ENCODE measurements at regions of chr16 and their contacts with region 1.

Region 1: DNA sequence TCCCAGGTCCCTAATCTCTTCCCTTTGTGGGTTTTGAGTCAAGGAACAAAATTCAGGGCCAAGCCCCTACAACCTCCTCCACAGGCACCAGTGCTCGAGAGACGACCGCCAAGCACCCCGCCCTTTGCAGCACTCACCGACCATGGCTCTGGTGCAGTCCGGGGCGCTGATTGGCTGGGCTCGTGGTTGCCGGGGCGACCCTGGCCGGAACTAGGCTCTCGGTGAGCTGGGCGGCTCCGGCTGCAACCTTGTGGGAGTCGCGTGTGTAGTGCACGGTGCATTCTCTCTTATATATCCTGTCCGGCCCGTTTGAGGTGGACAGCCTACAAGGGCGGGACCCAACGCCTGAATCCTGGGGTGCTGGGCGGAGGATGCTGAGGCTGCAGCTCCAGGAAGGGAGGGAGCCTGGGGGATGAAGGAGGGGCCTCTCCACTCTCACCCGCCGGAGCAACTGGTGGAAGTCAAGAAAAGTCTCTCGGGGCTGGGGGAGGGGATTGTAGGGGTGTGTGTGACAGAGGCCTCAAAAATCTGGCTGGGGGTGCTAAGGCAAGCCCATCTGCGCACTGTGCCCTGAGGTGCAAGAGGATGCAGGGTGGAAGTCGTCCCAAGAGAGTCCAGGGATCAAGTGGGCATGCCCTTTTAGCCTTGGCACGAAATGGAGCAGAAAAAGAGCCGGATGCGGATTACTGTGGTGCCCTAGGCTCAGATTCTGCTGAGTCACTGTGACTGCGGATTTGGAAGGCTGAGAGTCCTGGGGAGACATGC is at the start of gene NQO1:
- DNase-seq: peak; percentile 97
- H3K4me3 ChIP-seq: peak within 1 kb of the TSS; percentile 80
- H3K27ac ChIP-seq: peak within 1 kb of the TSS; percentile 99
- H3K27me3 ChIP-seq: no peaks in the 10 kb centered on the region
- CTCF ChIP-seq: no peak
- polyA plus RNA-seq, gene NQO1: 557 and 580 TPM in 2 replicates

Region 2: DNA sequence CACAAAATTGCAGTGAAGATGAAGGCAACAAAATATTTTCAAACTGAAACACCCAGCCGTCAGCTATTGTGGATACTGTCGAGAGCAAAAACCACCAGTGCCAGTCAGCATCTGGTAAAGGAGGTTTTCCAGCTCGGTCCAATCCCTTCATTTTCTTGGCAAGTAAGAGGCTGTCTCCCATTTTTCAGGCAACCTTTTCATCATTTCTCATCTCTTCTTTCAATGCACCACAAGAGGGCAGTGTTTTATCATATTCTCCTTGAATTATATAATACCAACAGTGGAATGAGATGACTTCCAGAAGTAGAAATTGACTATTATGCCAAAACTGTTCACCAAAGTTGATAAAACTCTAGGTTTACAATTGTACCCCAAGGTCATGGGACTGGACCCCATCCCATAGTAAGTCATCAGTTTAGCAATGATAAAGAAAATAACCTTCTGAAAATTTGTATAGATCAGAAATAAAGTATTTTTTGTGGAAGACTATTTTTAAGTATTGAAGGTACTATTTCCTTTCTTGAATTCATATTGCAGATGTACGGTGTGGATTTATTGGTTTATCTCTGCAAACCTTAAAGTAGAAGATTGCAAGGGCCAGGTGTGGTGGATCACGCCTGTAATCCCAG is 16.9 kb before region 1 on chr16:
- CTCF ChIA-PET with region 1: interaction called, 28 read pairs
- POLR2A ChIA-PET with region 1: interaction called, 10 read pairs
- DNase-seq: no peak
- H3K4me3 ChIP-seq: no peak overlapping the region
- H3K27ac ChIP-seq: no peak overlapping the region
- H3K27me3 ChIP-seq: no peaks in the 10 kb centered on the region
- CTCF ChIP-seq: peak; percentile 60

Region 3: DNA sequence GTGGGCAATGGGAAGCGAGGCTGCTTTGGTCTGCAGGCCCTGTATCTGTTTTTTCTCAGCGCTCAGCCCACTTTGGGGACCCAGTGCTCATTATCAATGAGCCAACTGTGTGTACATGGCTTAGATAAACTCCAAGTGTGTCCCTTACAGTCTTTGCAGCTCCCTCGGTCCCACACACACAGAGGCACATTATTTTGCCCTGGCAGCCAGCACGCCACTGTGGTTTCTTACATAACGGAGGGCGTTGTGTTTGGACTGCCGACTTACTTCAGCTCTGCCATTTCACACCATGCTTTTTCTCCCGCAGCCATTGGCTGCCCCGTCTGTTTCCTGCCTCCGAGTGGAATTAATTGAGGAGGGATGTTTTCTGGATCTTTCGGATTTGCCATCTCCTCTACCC is 168.2 kb after region 1 on chr16:
- CTCF ChIA-PET with region 1: no interaction called
- POLR2A ChIA-PET with region 1: no interaction called
- DNase-seq: no peak
- H3K4me3 ChIP-seq: no peak overlapping the region
- H3K27ac ChIP-seq: no peak overlapping the region
- H3K27me3 ChIP-seq: no peaks in the 10 kb centered on the region
- CTCF ChIP-seq: no peak

Measured in AG04450 (cell line).